ENCODE measurements at regions of chrX and their contacts with region 1.

Region 1: DNA sequence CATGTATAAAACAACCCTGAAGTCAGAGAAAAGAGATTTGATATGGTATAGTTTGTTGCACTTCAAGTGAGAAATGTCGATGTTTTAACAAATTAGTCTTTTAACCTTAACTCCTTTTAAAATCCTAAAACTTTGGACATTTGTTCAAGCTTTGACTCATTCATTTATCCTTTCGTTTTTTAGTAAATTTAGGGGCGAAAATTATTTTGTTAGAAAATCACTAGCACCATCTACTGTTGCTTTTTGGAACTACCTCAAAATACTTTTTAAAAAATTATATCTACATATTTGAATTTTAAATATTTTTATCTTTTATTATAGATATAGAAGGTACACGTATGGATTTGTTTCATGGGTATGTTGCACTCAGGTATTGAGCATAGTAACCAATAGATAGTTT is 165.1 kb upstream of the POF1B start:
- DNase-seq: no peak
- ATAC-seq: no peak
- H3K4me3 ChIP-seq: no peak overlapping the region
- H3K27ac ChIP-seq: no peak overlapping the region
- H3K4me1 ChIP-seq: no peaks in the 10 kb centered on the region
- H3K27me3 ChIP-seq: no peaks in the 10 kb centered on the region
- CTCF ChIP-seq: peak; percentile 48

Region 2: GRCh38 chrX:85084770-85085393 is 459.7 kb before region 1 on chrX:
- intact Hi-C with region 1: loop called in 1 of 2 experiments (anchors 10 kb)
- DNase-seq: no peak
- ATAC-seq: peak in 3 of 4 donors; percentile 45 to 59 (median 49)
- H3K4me3 ChIP-seq: no peak overlapping the region
- H3K27ac ChIP-seq: no peak overlapping the region
- H3K4me1 ChIP-seq: no peaks in the 10 kb centered on the region
- H3K27me3 ChIP-seq: peaks cover 0 to 3% (median 0%) of the 10 kb centered on the region in 3 donors
- CTCF ChIP-seq: peak; percentile 83

Region 3: DNA sequence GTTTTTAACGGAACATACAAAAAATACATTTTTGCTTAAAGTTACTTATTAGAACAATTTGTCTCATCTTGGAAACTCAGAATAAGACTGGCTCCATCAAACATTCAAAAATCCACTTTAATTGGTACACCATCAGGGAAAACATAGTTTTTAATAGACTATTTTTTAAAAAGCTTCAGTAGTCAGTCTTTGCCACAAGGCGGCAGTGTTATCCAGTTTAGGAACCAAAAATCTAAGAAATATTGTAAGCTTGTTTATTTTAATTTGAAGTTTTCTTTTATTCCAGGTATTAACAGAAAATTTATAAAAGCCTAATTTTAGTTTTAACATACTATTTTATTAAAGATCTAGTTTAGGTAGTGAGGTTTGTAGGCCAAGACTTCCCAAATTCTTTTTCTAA is 433.3 kb before region 1 on chrX:
- intact Hi-C with region 1: loop called (anchors 10 kb)
- DNase-seq: no peak
- ATAC-seq: no peak
- H3K4me3 ChIP-seq: no peak overlapping the region
- H3K27ac ChIP-seq: no peak overlapping the region
- H3K4me1 ChIP-seq: no peaks in the 10 kb centered on the region
- H3K27me3 ChIP-seq: no peaks in the 10 kb centered on the region
- CTCF ChIP-seq: peak; percentile 75

Region 4: DNA sequence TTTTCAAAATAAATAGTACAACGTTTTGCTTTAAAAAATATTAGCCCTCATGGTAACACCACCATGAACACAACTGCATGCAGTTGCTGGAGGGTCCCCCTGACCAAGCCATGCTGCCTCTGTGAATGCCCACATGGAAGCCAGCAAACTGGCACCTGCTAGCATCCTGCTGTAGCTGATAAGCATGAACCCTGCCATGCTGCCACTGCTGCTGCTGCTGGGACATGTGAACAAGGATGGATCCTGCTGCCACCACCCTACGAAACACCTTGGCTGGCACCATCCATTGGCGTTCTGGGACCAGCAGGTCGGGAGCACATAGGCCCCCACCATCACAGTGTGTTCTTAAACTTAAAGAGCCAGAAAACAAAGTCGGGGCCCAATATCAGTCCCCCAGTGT is 385.0 kb before region 1 on chrX:
- intact Hi-C with region 1: no loop called
- DNase-seq: peak in 1 of 2 donors; percentile 19
- ATAC-seq: no peak
- H3K4me3 ChIP-seq: no peak overlapping the region
- H3K27ac ChIP-seq: no peak overlapping the region
- H3K4me1 ChIP-seq: no peaks in the 10 kb centered on the region
- H3K27me3 ChIP-seq: no peaks in the 10 kb centered on the region
- CTCF ChIP-seq: no peak

Region 5: GRCh38 chrX:85309717-85310116 is 234.9 kb before region 1 on chrX:
- intact Hi-C with region 1: no loop called
- DNase-seq: no peak
- ATAC-seq: no peak
- H3K4me3 ChIP-seq: no peak overlapping the region
- H3K27ac ChIP-seq: no peak overlapping the region
- H3K4me1 ChIP-seq: no peaks in the 10 kb centered on the region
- H3K27me3 ChIP-seq: no peaks in the 10 kb centered on the region
- CTCF ChIP-seq: no peak

Region 6: GRCh38 chrX:85590638-85591037 is 46.0 kb after region 1 on chrX:
- intact Hi-C with region 1: no loop called
- DNase-seq: no peak
- ATAC-seq: no peak
- H3K4me3 ChIP-seq: no peak overlapping the region
- H3K27ac ChIP-seq: no peak overlapping the region
- H3K4me1 ChIP-seq: no peaks in the 10 kb centered on the region
- H3K27me3 ChIP-seq: no peaks in the 10 kb centered on the region
- CTCF ChIP-seq: no peak

Measured in psoas muscle (tissue), 8 donors.